ENCODE measurements at regions of chr19 and their contacts with region 1.

Region 1: DNA sequence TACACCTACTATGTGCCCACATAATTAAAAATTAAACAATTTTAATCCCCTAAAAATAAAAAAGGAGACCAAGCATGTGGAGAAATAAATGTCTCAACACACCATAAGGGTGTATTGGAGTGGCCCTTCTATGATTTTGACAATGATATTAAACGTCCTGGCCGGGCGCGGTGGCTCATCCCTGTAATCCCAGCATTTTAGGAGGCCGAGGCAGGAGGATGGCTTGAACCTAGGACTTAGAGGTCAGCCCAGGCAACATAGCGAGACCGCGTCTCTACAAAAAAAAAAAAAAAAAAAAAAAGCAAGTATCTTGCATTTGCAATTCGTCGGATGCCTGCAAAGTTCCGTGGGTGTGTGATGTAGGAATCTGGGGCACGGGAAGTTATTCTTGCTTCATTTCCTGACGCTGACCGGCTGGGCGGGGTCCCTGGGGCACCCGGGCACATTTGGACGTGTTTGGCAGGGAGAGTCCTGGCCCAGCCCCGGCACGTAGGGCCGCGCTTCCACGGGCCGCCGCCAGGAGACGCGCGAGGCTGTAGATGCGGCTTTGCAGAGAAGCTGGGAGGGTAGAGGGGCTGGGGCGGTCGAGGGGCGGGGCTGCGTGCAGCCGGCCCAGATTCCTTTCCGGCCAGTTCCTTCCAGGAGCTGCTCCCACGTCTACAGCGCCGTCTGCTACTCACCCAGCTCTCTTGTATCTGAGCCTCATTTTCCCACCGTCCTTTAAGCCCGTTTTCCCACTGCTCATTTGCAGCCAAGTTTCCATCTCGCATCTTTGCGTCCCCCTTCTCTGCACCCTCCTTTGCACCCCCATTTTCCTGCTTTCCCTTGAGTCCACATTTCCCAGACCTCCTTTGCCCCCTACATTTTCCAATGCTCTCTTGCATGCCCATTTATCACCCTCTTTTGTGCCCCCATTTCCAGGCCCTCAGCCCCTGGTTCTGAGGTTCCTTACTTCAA is 2.2 kb upstream of the TSPAN16 start:
- DNase-seq: peak; percentile 93
- H3K4me3 ChIP-seq: peak overlapping the region in 2 of 3 experiments; percentile 33
- H3K27ac ChIP-seq: peak overlapping the region; percentile 38
- H3K4me1 ChIP-seq: peaks cover 7% of the 10 kb centered on the region
- H3K27me3 ChIP-seq: no peaks in the 10 kb centered on the region
- CTCF ChIP-seq: peak; percentile 88 to 99

Region 2: DNA sequence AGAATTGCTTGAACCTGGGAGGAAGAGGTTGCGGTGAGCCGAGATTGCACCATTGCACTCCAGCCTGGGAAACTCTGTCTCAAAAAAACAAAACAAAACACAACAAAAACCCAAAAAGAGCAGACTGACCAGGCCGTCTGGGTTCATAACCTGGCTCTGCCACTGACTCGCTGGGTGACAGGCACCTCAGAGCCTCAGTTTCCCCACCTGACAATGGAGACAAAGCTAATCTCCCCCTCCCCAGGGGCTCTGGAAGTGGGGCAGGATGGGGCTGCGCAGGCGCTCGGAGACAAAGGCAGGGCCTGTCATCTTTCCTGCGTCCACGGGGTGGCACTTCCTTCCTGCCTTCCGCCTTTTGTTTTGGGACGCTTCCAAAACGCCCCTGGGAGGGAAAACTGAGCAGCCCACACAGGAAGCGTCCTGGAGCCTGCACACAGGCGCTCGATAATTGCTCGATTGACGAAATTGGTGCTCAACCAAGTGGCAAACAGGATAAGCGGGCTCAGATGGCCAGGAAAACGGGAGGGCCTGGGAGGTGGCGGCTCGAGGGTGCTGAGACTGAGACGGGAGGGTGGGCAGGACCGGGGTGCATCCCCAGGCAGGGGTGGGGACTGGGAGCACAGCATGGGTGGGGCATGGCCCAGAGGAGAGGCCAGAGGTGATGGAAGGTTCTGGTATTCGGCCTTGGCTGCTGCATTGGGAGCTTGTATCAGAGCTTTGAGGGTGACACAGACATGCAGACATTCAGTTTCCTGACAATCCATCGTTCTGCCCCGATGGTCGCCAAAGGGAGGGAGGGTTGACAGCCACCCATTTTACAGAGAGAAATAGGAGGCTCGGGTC is 155.9 kb before region 1 on chr19:
- CTCF ChIA-PET with region 1: no interaction called
- dilution Hi-C with region 1: no loop called
- in situ Hi-C with region 1: no loop called
- intact Hi-C with region 1: loop called (anchors 1 kb)
- DNase-seq: peak; percentile 78
- H3K4me3 ChIP-seq: peak overlapping the region in 1 of 3 experiments; percentile 32
- H3K27ac ChIP-seq: no peak overlapping the region
- H3K4me1 ChIP-seq: peaks cover 29% of the 10 kb centered on the region
- H3K27me3 ChIP-seq: no peaks in the 10 kb centered on the region
- CTCF ChIP-seq: peak; percentile 78 to 92

Region 3: GRCh38 chr19:11355160-11356073 is 61.7 kb after region 1 on chr19 and contains the start of gene PLPPR2:
- CTCF ChIA-PET with region 1: no interaction called
- dilution Hi-C with region 1: no loop called
- in situ Hi-C with region 1: no loop called
- intact Hi-C with region 1: loop called (anchors 5 kb)
- DNase-seq: peak; percentile 76
- H3K4me3 ChIP-seq: peak within 1 kb of the TSS; percentile 33 to 67 (median 47)
- H3K27ac ChIP-seq: no peak within 1 kb of the TSS
- H3K4me1 ChIP-seq: peaks cover 4% of the 10 kb centered on the region
- H3K27me3 ChIP-seq: no peaks in the 10 kb centered on the region
- CTCF ChIP-seq: no peak
- total RNA-seq, gene PLPPR2: 5.0 to 25.2 TPM

Region 4: GRCh38 chr19:11405846-11406643 is 112.3 kb after region 1 on chr19:
- CTCF ChIA-PET with region 1: interaction called, 28 read pairs
- dilution Hi-C with region 1: no loop called
- in situ Hi-C with region 1: no loop called
- intact Hi-C with region 1: loop called (anchors 2 kb)
- DNase-seq: peak; percentile 24
- H3K4me3 ChIP-seq: peak overlapping the region in 1 of 3 experiments; percentile 20
- H3K27ac ChIP-seq: no peak overlapping the region
- H3K4me1 ChIP-seq: peaks cover 4% of the 10 kb centered on the region
- H3K27me3 ChIP-seq: no peaks in the 10 kb centered on the region
- CTCF ChIP-seq: peak; percentile 21 to 63

Region 5: GRCh38 chr19:11482384-11483050 is 188.8 kb after region 1 on chr19:
- CTCF ChIA-PET with region 1: no interaction called
- dilution Hi-C with region 1: no loop called
- in situ Hi-C with region 1: loop called in 1 of 2 experiments (anchors 25 kb)
- intact Hi-C with region 1: loop called (anchors 1 kb)
- DNase-seq: peak; percentile 69
- H3K4me3 ChIP-seq: peak overlapping the region; percentile 31 to 40 (median 35)
- H3K27ac ChIP-seq: no peak overlapping the region
- H3K4me1 ChIP-seq: peaks cover 9% of the 10 kb centered on the region
- H3K27me3 ChIP-seq: peaks cover 25% of the 10 kb centered on the region
- CTCF ChIP-seq: peak; percentile 61 to 91